ENCODE measurements at regions of chr10 and their contacts with region 1.

Region 1: DNA sequence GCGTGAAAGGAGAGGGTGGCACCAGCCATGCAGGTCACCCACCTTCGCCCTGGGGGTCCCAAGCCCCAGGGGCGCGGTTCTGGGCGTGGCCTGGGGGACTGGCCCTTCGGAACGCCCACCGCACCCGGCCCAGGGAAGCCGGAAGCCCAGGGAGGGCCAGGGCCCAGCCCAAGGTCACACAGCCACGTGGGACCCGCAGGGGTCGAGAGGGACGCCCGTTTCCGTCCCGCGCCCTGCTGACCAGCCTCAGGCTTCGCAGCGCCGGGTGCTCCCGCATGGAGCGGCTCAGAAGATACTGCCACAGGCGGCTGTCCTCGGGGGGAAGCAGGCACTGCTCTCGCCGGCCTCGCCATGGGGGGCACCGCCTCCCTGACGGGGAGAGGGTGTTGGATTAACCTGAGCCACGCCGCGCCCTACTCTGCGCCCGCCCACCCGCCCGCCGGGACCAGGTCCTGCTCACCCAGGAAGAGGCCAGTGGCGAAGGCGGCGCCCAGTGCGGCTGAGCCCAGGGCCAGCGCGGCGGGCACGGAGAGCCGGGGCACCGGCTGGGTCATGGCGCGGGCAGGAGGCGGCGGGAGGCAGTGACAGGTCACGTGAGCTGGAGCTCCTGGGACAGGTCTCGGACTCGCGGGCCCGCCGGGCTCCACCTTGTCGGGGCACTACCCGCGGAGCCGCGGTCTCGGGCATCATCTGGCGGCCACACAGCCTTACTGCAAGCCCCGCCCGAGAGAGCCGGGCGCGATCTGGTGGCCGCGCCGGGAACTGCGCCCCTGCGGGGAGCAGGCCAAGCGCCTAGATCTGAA is at the start of gene COMTD1:
- DNase-seq: peak; percentile 86 to 95 (median 93)
- ATAC-seq: peak; percentile 66 to 72
- H3K4me3 Mint-ChIP-seq: peak within 1 kb of the TSS; percentile 71 to 91 (median 82)
- H3K27ac Mint-ChIP-seq: peak within 1 kb of the TSS; percentile 86 to 96 (median 92)
- H3K4me1 Mint-ChIP-seq: peaks cover 6 to 25% (median 18%) of the 10 kb centered on the region in 4 donors
- H3K27me3 Mint-ChIP-seq: peaks cover 0 to 1% (median 0%) of the 10 kb centered on the region in 5 donors
- polyA plus RNA-seq, gene COMTD1: 8.1 to 26.0 (median 9.4) TPM

Region 2: DNA sequence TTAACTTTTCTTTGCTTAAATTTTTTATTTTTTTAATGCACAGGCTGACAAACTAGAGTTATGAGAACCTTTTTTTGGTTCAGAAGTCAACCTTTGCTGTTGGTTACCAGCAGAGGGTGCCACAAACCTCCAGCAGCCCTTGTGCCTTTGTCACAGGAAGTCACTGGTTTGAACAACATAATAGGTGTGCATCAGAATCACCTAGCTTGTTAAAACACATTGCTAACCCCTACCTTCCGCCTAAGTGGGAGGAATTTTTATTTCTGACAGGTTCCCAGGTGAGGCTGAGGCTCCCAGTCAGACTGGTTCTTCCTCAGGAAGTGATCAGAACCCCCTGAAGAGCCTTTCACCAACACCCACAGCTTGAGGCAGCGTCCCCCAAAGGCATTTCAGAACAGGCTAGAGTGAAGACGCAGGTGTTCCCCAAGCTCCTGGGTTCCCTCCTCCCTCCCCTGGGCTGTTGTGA is 47.6 kb before region 1 on chr10:
- POLR2A ChIA-PET with region 1: interaction called, 22 read pairs
- DNase-seq: peak; percentile 37 to 87 (median 76)
- ATAC-seq: peak; percentile 97 to 99
- H3K4me3 Mint-ChIP-seq: peak overlapping the region in 6 of 10 donors; percentile 26 to 68 (median 50)
- H3K27ac Mint-ChIP-seq: peak overlapping the region; percentile 83 to 98 (median 95)
- H3K4me1 Mint-ChIP-seq: peaks cover 6 to 14% (median 6%) of the 10 kb centered on the region in 4 donors
- H3K27me3 Mint-ChIP-seq: no peaks in the 10 kb centered on the region

Measured in naive thymus-derived CD8-positive, alpha-beta T cell (primary cell).